ENCODE measurements at regions of chr11 and their contacts with region 1.

Region 1: DNA sequence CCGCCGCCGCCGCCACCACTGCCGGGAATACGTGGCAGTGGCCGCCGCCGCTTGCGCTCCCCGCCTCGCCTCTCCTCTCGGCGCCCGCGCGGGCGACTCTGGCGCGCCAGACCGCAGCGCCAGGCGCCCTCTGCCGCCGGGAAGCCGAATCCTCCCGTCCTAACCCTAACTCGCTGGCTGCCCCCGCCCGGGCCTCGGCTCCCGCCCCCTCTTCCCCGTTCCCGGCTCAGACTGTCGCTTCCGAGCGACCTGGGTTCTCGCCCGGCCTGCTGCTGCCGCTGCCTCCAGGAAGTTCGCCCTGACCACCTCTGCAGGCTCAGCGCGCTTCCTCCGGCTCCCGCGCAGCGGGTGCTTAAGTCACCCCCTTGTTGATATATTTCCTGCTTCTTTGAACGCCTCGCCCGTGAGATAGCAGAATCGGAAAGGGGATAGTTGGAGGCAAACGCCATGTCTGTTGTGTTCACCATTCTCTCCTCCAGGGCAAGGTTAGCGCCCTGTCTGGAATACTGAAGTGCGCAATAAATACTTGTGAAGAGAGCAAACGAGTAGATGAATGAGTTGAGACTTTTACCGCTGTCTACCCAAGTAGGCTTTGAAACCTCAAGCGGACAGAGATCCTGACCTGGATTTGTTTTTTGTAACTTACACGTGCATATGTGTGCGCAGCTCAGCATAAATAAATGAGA is at the start of gene SMCO4:
- DNase-seq: peak; percentile 87 to 93 (median 89)
- ATAC-seq: peak; percentile 77 to 92 (median 92)
- H3K4me3 ChIP-seq: peak within 1 kb of the TSS; percentile 71 to 99 (median 84)
- H3K27ac ChIP-seq: peak within 1 kb of the TSS; percentile 69 to 96 (median 88)
- H3K4me1 ChIP-seq: peaks cover 0 to 45% (median 28%) of the 10 kb centered on the region in 12 donors
- H3K27me3 ChIP-seq: no peaks in the 10 kb centered on the region
- CTCF ChIP-seq: peak; percentile 66 to 94 (median 80)
- POLR2A ChIP-seq: no peak
- total RNA-seq, gene SMCO4: 28.5 to 71.7 (median 52.5) TPM

Region 2: GRCh38 chr11:92941676-92942571 is 601.5 kb before region 1 on chr11:
- intact Hi-C with region 1: loop called in 1 of 10 experiments (anchors 10 kb)
- DNase-seq: no peak
- ATAC-seq: no peak
- H3K4me3 ChIP-seq: no peak overlapping the region
- H3K27ac ChIP-seq: no peak overlapping the region
- H3K4me1 ChIP-seq: no peaks in the 10 kb centered on the region
- H3K27me3 ChIP-seq: peaks cover 0 to 14% (median 0%) of the 10 kb centered on the region in 9 donors
- CTCF ChIP-seq: peak; percentile 30 to 64 (median 50)
- POLR2A ChIP-seq: no peak

Region 3: GRCh38 chr11:93234602-93235207 is 308.7 kb before region 1 on chr11:
- intact Hi-C with region 1: loop called (anchors 1 to 5 kb)
- DNase-seq: peak; percentile 61 to 77 (median 74)
- ATAC-seq: peak; percentile 97 to 99 (median 97)
- H3K4me3 ChIP-seq: no peak overlapping the region
- H3K27ac ChIP-seq: no peak overlapping the region
- H3K4me1 ChIP-seq: peaks cover 0 to 2% (median 0%) of the 10 kb centered on the region in 12 donors
- H3K27me3 ChIP-seq: peaks cover 0 to 3% (median 0%) of the 10 kb centered on the region in 9 donors
- CTCF ChIP-seq: peak; percentile 85 to 95 (median 88)
- POLR2A ChIP-seq: no peak

Region 4: DNA sequence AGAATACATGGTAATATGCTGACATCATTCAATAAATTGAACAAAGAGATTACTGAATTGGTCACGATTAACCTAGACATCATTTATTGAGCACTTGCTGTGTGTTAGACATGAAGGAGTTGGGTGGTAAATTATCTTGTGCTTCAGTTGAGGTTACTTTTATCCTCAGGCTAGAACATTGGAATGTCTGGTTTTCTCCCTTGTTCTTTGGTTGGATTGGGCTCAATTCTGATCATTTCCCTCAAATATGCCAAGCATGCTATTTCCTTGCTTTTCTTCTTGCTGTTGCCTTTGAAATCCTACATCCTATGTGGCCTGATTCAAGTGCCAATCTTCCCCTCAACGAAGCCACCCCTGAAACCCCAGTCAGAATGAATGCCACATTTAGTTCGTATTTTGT is 147.1 kb before region 1 on chr11:
- intact Hi-C with region 1: loop called in 2 of 10 experiments (anchors 10 kb)
- DNase-seq: no peak
- ATAC-seq: no peak
- H3K4me3 ChIP-seq: no peak overlapping the region
- H3K27ac ChIP-seq: no peak overlapping the region
- H3K4me1 ChIP-seq: peaks cover 0 to 7% (median 0%) of the 10 kb centered on the region in 12 donors
- H3K27me3 ChIP-seq: no peaks in the 10 kb centered on the region
- CTCF ChIP-seq: no peak
- POLR2A ChIP-seq: no peak

Region 5: DNA sequence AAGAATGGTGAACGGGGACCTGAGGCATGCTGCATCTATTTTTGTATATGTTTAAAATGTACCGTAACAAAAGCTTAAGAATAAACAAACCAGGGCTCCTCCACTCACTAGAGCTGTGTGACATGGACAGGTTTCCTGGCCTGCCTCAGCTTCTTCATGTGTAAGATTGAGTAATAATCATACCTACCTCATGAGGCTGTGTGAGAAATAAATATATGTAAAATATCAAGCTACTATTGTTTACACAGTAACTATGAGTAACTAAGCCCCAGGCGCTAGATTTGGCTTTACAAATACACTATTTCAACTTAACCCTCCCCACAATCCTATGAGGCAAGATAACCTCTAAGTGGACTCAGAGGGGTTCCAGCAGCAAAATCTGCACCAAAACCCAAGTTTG is 66.6 kb before region 1 on chr11:
- intact Hi-C with region 1: loop called in 6 of 10 experiments (anchors 2 to 5 kb)
- DNase-seq: no peak
- ATAC-seq: no peak
- H3K4me3 ChIP-seq: no peak overlapping the region
- H3K27ac ChIP-seq: no peak overlapping the region
- H3K4me1 ChIP-seq: peaks cover 0 to 4% (median 0%) of the 10 kb centered on the region in 12 donors
- H3K27me3 ChIP-seq: no peaks in the 10 kb centered on the region
- CTCF ChIP-seq: no peak
- POLR2A ChIP-seq: no peak

Region 6: GRCh38 chr11:93591247-93591898 is 47.9 kb after region 1 on chr11:
- intact Hi-C with region 1: no loop called
- DNase-seq: no peak
- ATAC-seq: no peak
- H3K4me3 ChIP-seq: no peak overlapping the region
- H3K27ac ChIP-seq: no peak overlapping the region
- H3K4me1 ChIP-seq: no peaks in the 10 kb centered on the region
- H3K27me3 ChIP-seq: no peaks in the 10 kb centered on the region
- CTCF ChIP-seq: no peak
- POLR2A ChIP-seq: no peak

Region 7: DNA sequence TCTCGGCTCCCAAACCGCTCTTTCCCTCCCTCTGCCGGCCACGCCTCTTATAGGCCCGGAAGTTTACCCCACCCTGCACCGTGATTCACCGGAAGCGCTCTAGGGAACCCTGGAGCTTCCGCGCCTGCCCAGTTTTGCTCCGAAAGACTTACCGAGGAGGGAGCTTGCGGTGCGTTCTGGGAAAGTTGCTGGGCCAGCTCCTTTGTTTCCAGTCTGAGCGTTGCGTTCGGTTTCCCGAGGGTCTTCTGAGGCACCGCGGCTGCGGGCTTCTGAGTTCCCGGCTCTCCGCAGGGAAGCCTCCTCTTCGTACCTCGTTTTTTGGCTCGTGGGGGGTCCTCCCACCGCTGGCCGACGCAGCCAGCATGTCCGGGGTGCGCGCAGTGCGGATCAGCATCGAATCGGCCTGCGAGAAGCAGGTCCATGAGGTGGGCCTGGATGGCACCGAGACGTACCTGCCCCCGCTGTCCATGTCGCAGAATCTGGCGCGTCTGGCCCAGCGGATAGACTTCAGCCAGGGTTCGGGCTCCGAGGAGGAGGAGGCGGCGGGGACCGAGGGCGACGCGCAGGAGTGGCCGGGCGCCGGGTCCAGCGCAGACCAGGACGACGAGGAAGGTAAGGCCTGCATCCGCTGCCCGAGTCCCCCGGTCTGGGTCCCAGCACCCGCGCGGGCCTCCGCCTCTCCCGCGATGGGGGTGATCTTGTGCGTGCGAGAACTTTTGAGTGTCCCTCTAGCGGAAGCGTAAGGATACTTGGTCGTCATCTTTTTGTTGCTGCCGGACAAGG is 240.9 kb after region 1 on chr11 and contains the start of gene MED17:
- intact Hi-C with region 1: no loop called
- DNase-seq: peak; percentile 93 to 95 (median 95)
- ATAC-seq: peak; percentile 99 to 100 (median 100)
- H3K4me3 ChIP-seq: peak within 1 kb of the TSS; percentile 75 to 98 (median 88)
- H3K27ac ChIP-seq: peak within 1 kb of the TSS; percentile 84 to 98 (median 95)
- H3K4me1 ChIP-seq: peaks cover 0 to 36% (median 30%) of the 10 kb centered on the region in 12 donors
- H3K27me3 ChIP-seq: no peaks in the 10 kb centered on the region
- CTCF ChIP-seq: peak; percentile 12 to 71 (median 45)
- POLR2A ChIP-seq: peak in 1 of 2 donors; percentile 83
- total RNA-seq, gene MED17: 14.6 to 28.6 (median 16.1) TPM

Measured in heart left ventricle (tissue), 16 donors.